ENCODE measurements at regions of chr13 and their contacts with region 1.

Region 1: DNA sequence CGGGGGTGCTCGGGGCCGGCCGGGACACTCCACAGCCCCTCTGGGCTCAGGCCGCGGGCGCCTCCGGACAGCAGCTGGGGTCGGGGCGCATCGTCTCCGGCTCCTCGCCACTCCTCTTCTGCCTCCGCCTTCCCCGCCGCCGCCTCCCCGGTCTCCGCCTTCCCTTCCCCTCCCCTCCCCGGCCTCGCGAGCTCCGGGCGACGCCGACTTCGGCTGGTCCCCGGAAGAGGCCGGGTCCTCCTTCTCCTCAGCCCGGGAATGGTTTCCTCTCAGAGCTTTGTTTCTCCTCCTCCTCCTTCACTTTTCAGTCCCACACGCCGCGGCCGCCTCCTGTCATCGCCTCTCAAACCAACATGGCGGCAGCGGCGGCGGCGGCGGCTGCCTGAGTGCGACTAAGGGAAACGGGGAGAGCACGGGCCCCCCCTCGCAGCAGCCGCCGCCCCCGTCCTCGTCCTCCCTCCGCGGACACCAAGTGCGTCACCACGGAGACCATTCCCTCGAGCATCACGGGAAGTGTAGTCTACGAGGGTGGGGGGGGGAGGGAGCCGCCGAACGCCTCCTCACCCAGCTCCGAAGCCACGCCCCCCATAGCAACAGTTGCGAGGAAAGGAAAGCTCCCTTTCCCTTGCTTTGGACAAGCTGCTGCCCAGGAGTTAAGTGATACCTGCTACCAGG is at the start of gene UBL3:
- DNase-seq: peak; percentile 88 to 95 (median 92)
- ATAC-seq: peak; percentile 97
- H3K4me3 ChIP-seq: peak within 1 kb of the TSS; percentile 78
- H3K4me3 Mint-ChIP-seq: peak within 1 kb of the TSS; percentile 91 to 99 (median 96)
- H3K27ac ChIP-seq: peak within 1 kb of the TSS; percentile 98
- H3K27ac Mint-ChIP-seq: peak within 1 kb of the TSS; percentile 91 to 100 (median 99)
- H3K4me1 ChIP-seq: peaks cover 5 to 13% of the 10 kb centered on the region in 2 donors
- H3K4me1 Mint-ChIP-seq: peaks cover 10 to 42% (median 24%) of the 10 kb centered on the region in 7 donors
- H3K27me3 ChIP-seq: no peaks in the 10 kb centered on the region
- H3K27me3 Mint-ChIP-seq: no peaks in the 10 kb centered on the region
- total RNA-seq, gene UBL3: 12.7 to 34.5 (median 28.9) TPM

Region 2: GRCh38 chr13:29771247-29771646 is 79.1 kb before region 1 on chr13:
- CTCF ChIA-PET with region 1: interaction called, 6 read pairs
- POLR2A ChIA-PET with region 1: no interaction called
- intact Hi-C with region 1: loop called (anchors 1 to 2 kb)
- DNase-seq: peak in 7 of 9 donors; percentile 31 to 67 (median 52)
- ATAC-seq: peak; percentile 77
- H3K4me3 ChIP-seq: no peak overlapping the region
- H3K4me3 Mint-ChIP-seq: no peak overlapping the region
- H3K27ac ChIP-seq: no peak overlapping the region
- H3K27ac Mint-ChIP-seq: peak overlapping the region in 1 of 9 donors; percentile 11
- H3K4me1 ChIP-seq: no peaks in the 10 kb centered on the region
- H3K4me1 Mint-ChIP-seq: peaks cover 0 to 14% (median 4%) of the 10 kb centered on the region in 7 donors
- H3K27me3 ChIP-seq: no peaks in the 10 kb centered on the region
- H3K27me3 Mint-ChIP-seq: no peaks in the 10 kb centered on the region

Region 3: GRCh38 chr13:29884671-29885430 is 34.5 kb after region 1 on chr13:
- CTCF ChIA-PET with region 1: no interaction called
- POLR2A ChIA-PET with region 1: no interaction called
- intact Hi-C with region 1: no loop called
- DNase-seq: no peak
- ATAC-seq: no peak
- H3K4me3 ChIP-seq: no peak overlapping the region
- H3K4me3 Mint-ChIP-seq: no peak overlapping the region
- H3K27ac ChIP-seq: no peak overlapping the region
- H3K27ac Mint-ChIP-seq: peak overlapping the region in 1 of 9 donors; percentile 84
- H3K4me1 ChIP-seq: no peaks in the 10 kb centered on the region
- H3K4me1 Mint-ChIP-seq: peaks cover 0 to 22% (median 0%) of the 10 kb centered on the region in 7 donors
- H3K27me3 ChIP-seq: no peaks in the 10 kb centered on the region
- H3K27me3 Mint-ChIP-seq: peaks cover 0 to 9% (median 0%) of the 10 kb centered on the region in 5 donors

Region 4: GRCh38 chr13:29935309-29935981 is 85.1 kb after region 1 on chr13:
- CTCF ChIA-PET with region 1: interaction called, 17 read pairs
- POLR2A ChIA-PET with region 1: interaction called, 64 read pairs
- intact Hi-C with region 1: loop called (anchors 1 kb)
- DNase-seq: peak; percentile 38 to 84 (median 77)
- ATAC-seq: peak; percentile 93
- H3K4me3 ChIP-seq: peak overlapping the region; percentile 61
- H3K4me3 Mint-ChIP-seq: peak overlapping the region; percentile 67 to 95 (median 91)
- H3K27ac ChIP-seq: peak overlapping the region; percentile 71
- H3K27ac Mint-ChIP-seq: peak overlapping the region; percentile 81 to 96 (median 93)
- H3K4me1 ChIP-seq: peaks cover 38 to 43% of the 10 kb centered on the region in 2 donors
- H3K4me1 Mint-ChIP-seq: peaks cover 32 to 53% (median 51%) of the 10 kb centered on the region in 7 donors
- H3K27me3 ChIP-seq: no peaks in the 10 kb centered on the region
- H3K27me3 Mint-ChIP-seq: no peaks in the 10 kb centered on the region

Region 5: DNA sequence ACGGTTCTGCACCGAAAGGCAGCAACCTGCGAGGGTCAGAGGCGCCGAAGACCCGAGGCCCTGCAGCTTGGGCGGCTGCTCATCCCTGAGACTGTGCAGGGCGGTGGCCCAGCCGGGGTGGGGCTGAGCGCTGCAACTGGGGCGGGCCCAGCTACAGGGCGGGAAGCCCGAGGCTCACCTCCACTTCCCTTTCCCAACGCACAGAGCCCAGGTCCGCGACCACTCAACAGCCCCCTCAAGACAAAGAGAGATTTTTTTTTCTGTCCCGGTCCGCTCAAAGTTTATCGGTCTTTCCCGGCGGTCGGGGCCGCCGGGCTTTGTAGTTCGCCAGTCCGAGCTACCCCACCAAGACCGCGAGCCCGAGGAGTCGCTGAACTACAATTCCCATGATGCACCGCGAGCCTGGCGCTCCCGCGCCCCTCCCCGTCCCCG is 456.4 kb after region 1 on chr13:
- CTCF ChIA-PET with region 1: no interaction called
- POLR2A ChIA-PET with region 1: no interaction called
- intact Hi-C with region 1: loop called (anchors 1 to 2 kb)
- DNase-seq: peak; percentile 78 to 91 (median 88)
- ATAC-seq: peak; percentile 95
- H3K4me3 ChIP-seq: peak overlapping the region; percentile 96
- H3K4me3 Mint-ChIP-seq: peak overlapping the region; percentile 79 to 92 (median 89)
- H3K27ac ChIP-seq: peak overlapping the region; percentile 78
- H3K27ac Mint-ChIP-seq: peak overlapping the region in 8 of 9 donors; percentile 37 to 89 (median 82)
- H3K4me1 ChIP-seq: peaks cover 0 to 4% of the 10 kb centered on the region in 2 donors
- H3K4me1 Mint-ChIP-seq: peaks cover 0 to 48% (median 7%) of the 10 kb centered on the region in 7 donors
- H3K27me3 ChIP-seq: no peaks in the 10 kb centered on the region
- H3K27me3 Mint-ChIP-seq: no peaks in the 10 kb centered on the region

Region 6: GRCh38 chr13:30572859-30573275 is 722.5 kb after region 1 on chr13:
- CTCF ChIA-PET with region 1: no interaction called
- POLR2A ChIA-PET with region 1: no interaction called
- intact Hi-C with region 1: loop called in 1 of 2 experiments (anchors 5 kb)
- DNase-seq: peak in 7 of 9 donors; percentile 19 to 65 (median 49)
- ATAC-seq: peak; percentile 69
- H3K4me3 ChIP-seq: peak overlapping the region; percentile 55
- H3K4me3 Mint-ChIP-seq: peak overlapping the region; percentile 66 to 88 (median 81)
- H3K27ac ChIP-seq: peak overlapping the region; percentile 81
- H3K27ac Mint-ChIP-seq: peak overlapping the region; percentile 88 to 97 (median 94)
- H3K4me1 ChIP-seq: peaks cover 13 to 24% of the 10 kb centered on the region in 2 donors
- H3K4me1 Mint-ChIP-seq: peaks cover 14 to 42% (median 36%) of the 10 kb centered on the region in 7 donors
- H3K27me3 ChIP-seq: no peaks in the 10 kb centered on the region
- H3K27me3 Mint-ChIP-seq: peaks cover 0 to 3% (median 0%) of the 10 kb centered on the region in 5 donors

Region 7: DNA sequence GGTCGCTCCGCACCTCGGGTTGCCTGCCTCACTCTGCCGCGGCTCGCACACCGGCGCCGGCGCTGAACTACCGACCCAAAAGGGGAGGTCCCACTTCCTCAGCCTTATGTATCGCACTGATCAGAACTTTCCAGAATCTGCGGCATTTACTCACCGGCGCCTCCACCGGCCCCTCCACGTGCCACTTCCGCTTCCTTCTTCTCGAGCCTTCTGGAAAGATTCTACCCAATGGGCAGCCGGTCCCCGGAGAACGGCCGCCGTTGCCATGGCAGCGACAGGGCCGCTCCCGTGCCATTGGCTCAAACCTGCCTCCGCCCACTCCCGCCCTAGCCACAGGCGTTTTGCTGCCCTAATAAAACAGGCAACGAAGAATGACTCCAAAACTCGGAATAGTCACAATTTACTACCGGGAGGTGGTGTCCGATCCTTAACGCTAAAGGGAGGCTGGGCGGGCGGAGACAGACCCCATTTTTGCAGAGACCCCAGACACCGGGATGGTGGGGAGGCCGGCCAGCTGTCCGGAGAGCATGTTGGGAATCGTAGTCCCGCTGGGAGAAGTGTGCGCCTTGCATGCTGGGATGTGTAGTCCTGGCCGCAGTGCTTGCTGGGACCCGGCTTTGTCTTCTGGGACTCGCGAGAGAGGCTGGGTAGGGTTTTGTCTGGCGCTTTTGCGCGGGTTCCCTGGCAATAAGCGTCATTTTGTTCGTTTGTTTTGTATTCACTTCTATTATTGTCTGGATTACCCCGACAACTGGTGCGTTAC is 1311.6 kb after region 1 on chr13 and contains the start of gene HSPH1:
- CTCF ChIA-PET with region 1: no interaction called
- POLR2A ChIA-PET with region 1: no interaction called
- intact Hi-C with region 1: loop called (anchors 1 kb)
- DNase-seq: peak; percentile 95 to 100 (median 99)
- ATAC-seq: peak; percentile 91
- H3K4me3 ChIP-seq: peak within 1 kb of the TSS; percentile 89
- H3K4me3 Mint-ChIP-seq: peak within 1 kb of the TSS; percentile 92 to 98 (median 94)
- H3K27ac ChIP-seq: peak within 1 kb of the TSS; percentile 96
- H3K27ac Mint-ChIP-seq: peak within 1 kb of the TSS; percentile 98 to 99 (median 99)
- H3K4me1 ChIP-seq: peaks cover 22 to 26% of the 10 kb centered on the region in 2 donors
- H3K4me1 Mint-ChIP-seq: peaks cover 23 to 52% (median 47%) of the 10 kb centered on the region in 7 donors
- H3K27me3 ChIP-seq: no peaks in the 10 kb centered on the region
- H3K27me3 Mint-ChIP-seq: peaks cover 0 to 3% (median 0%) of the 10 kb centered on the region in 5 donors
- total RNA-seq, gene HSPH1: 65.5 to 154 (median 107) TPM

Measured in naive thymus-derived CD4-positive, alpha-beta T cell (primary cell).